ENCODE measurements at regions of chr6 and their contacts with region 1.

Region 1: GRCh38 chr6:41367700-41368099 is 32.3 kb downstream of the NCR2 start:
- DNase-seq: no peak
- ATAC-seq: no peak
- H3K4me3 Mint-ChIP-seq: no peak overlapping the region
- H3K27ac Mint-ChIP-seq: no peak overlapping the region
- H3K4me1 Mint-ChIP-seq: peaks cover 19% of the 10 kb centered on the region
- H3K27me3 Mint-ChIP-seq: peaks cover 55% of the 10 kb centered on the region
- CTCF ChIP-seq: no peak

Region 2: GRCh38 chr6:40456390-40457013 is 911.2 kb before region 1 on chr6:
- CTCF ChIA-PET with region 1: no interaction called
- POLR2A ChIA-PET with region 1: no interaction called
- intact Hi-C with region 1: no loop called
- DNase-seq: no peak
- ATAC-seq: no peak
- H3K4me3 Mint-ChIP-seq: no peak overlapping the region
- H3K27ac Mint-ChIP-seq: no peak overlapping the region
- H3K4me1 Mint-ChIP-seq: no peaks in the 10 kb centered on the region
- H3K27me3 Mint-ChIP-seq: no peaks in the 10 kb centered on the region
- CTCF ChIP-seq: no peak

Region 3: GRCh38 chr6:41306187-41306854 is 61.4 kb before region 1 on chr6:
- CTCF ChIA-PET with region 1: interaction called, 11 read pairs
- POLR2A ChIA-PET with region 1: no interaction called
- intact Hi-C with region 1: loop called (anchors 1 kb)
- DNase-seq: no peak
- ATAC-seq: no peak
- H3K4me3 Mint-ChIP-seq: no peak overlapping the region
- H3K27ac Mint-ChIP-seq: no peak overlapping the region
- H3K4me1 Mint-ChIP-seq: peaks cover 36% of the 10 kb centered on the region
- H3K27me3 Mint-ChIP-seq: no peaks in the 10 kb centered on the region
- CTCF ChIP-seq: peak; percentile 45

Region 4: DNA sequence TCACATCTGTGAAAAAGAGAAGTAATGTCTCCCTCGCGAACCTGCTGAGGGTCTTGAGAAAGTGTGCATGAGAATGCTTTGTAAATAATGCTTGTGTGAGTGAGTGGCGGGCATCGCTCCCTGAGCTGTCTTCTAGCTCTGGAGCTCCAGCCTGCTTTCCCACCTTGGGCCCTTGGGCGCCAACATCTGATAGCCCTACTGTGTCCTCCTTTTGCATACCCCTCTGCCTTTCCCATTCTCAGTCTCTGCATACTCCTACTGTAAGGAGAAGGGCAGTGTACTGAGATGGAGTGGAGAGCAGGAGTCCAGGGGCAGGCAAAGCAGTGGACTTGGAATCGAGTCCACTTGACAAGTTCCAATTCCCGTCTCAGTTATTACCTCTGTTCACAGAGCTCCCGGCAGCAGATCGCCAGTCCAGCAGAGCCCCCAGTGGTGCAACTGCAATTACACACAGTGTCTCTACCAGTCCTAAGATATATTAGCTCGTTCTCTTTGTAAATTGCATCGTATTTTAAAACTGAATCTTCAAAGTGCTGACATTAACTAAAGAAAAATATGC is 33.1 kb before region 1 on chr6:
- CTCF ChIA-PET with region 1: interaction called, 10 read pairs
- POLR2A ChIA-PET with region 1: interaction called, 4 read pairs
- intact Hi-C with region 1: loop called (anchors 2 kb)
- DNase-seq: no peak
- ATAC-seq: no peak
- H3K4me3 Mint-ChIP-seq: peak overlapping the region; percentile 57
- H3K27ac Mint-ChIP-seq: peak overlapping the region; percentile 90
- H3K4me1 Mint-ChIP-seq: peaks cover 49% of the 10 kb centered on the region
- H3K27me3 Mint-ChIP-seq: no peaks in the 10 kb centered on the region
- CTCF ChIP-seq: no peak

Region 5: DNA sequence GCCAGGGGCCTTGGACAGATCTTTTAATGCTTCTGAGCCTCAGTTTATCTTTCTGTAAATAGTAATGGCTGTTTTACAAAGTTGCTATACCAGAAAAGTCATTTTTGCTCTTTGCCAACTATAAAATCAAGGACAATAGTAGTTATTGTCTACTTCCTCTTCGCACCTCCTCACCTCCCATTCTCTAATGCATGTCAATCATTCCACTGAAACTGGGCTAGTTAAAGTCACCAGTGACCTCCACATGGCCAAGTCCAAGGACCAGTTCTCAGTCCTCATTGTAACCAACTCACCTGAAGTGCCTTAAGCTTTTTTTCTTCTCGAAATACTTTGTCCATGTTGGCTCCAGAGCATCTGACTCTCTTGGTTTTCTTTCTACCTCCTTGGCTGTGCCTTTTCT is 18.9 kb after region 1 on chr6:
- CTCF ChIA-PET with region 1: no interaction called
- POLR2A ChIA-PET with region 1: no interaction called
- intact Hi-C with region 1: no loop called
- DNase-seq: no peak
- ATAC-seq: no peak
- H3K4me3 Mint-ChIP-seq: no peak overlapping the region
- H3K27ac Mint-ChIP-seq: no peak overlapping the region
- H3K4me1 Mint-ChIP-seq: no peaks in the 10 kb centered on the region
- H3K27me3 Mint-ChIP-seq: peaks cover 31% of the 10 kb centered on the region
- CTCF ChIP-seq: no peak

Region 6: GRCh38 chr6:41449399-41450245 is 81.9 kb after region 1 on chr6:
- CTCF ChIA-PET with region 1: interaction called, 4 read pairs
- POLR2A ChIA-PET with region 1: interaction called, 10 read pairs
- intact Hi-C with region 1: no loop called
- DNase-seq: no peak
- ATAC-seq: no peak
- H3K4me3 Mint-ChIP-seq: no peak overlapping the region
- H3K27ac Mint-ChIP-seq: no peak overlapping the region
- H3K4me1 Mint-ChIP-seq: no peaks in the 10 kb centered on the region
- H3K27me3 Mint-ChIP-seq: peaks cover 3% of the 10 kb centered on the region
- CTCF ChIP-seq: no peak

Region 7: DNA sequence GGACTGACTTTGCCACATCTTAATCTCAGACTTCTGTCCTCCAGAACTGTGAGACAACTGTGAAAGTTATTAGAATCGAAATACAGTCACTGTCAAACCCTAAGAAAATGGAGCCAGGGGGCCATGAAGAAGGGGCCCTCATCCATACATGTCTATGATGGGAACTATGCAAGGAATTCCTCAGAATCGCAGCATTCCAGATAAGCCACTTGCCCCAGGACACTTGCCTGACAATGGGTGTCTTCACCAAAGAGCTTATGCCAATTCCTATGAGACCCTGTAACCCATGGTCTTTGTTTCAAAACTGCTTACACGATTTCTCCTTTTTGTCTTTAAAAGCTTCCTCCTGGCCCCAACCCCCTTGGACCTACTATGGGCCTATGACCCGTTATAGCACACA is 88.1 kb after region 1 on chr6:
- CTCF ChIA-PET with region 1: interaction called, 4 read pairs
- POLR2A ChIA-PET with region 1: interaction called, 3 read pairs
- intact Hi-C with region 1: loop called (anchors 1 kb)
- DNase-seq: no peak
- ATAC-seq: no peak
- H3K4me3 Mint-ChIP-seq: no peak overlapping the region
- H3K27ac Mint-ChIP-seq: no peak overlapping the region
- H3K4me1 Mint-ChIP-seq: no peaks in the 10 kb centered on the region
- H3K27me3 Mint-ChIP-seq: no peaks in the 10 kb centered on the region
- CTCF ChIP-seq: no peak

Region 8: DNA sequence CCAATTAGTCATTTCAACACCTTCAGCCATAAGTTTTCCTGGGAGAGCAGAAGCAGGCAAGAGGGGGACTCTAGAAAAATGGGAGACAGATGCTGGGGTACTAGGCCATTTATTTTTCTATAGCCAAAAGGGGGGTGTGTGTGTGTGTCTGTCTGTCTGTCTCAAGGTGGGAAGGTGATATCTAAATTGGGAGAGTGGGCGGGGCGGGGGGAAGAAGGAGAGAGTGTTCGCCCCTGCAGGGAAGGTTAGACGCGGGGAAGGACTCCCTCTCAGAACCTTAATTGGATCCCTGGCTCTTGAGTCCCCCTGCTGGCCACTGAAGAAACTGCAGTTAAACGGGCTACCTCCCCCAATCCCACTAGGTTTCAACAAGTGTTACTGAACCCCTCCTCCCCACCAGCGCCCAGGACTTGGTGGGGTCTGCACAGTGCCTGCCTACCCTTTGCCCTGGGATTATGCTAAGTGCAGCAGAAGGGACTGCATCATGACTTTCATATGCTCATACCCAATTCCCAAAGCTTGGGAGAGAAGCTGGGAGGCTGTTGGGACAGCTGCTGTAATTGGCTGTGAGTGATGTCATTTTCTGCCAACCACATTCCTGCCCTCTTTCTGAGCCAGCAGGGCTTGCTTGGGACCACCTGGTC is 224.3 kb after region 1 on chr6:
- CTCF ChIA-PET with region 1: interaction called, 8 read pairs
- POLR2A ChIA-PET with region 1: no interaction called
- intact Hi-C with region 1: loop called (anchors 1 kb)
- DNase-seq: peak; percentile 73
- ATAC-seq: peak; percentile 85
- H3K4me3 Mint-ChIP-seq: no peak overlapping the region
- H3K27ac Mint-ChIP-seq: no peak overlapping the region
- H3K4me1 Mint-ChIP-seq: peaks cover 4% of the 10 kb centered on the region
- H3K27me3 Mint-ChIP-seq: no peaks in the 10 kb centered on the region
- CTCF ChIP-seq: peak; percentile 19